OCI-LY7 (cell line): ENCODE measurements at regions of chr6 and their contacts with region 1.

Region 1: GRCh38 chr6:141464490-141464889 is 668.2 kb upstream of the GJE1 start:
- DNase-seq: peak; percentile 56
- H3K4me3 ChIP-seq: no peak overlapping the region
- H3K27ac ChIP-seq: no peak overlapping the region
- H3K4me1 ChIP-seq: peaks cover 8% of the 10 kb centered on the region
- CTCF ChIP-seq: no peak

Region 2: GRCh38 chr6:141105481-141105880 is 359.0 kb before region 1 on chr6:
- CTCF ChIA-PET with region 1: no interaction called
- POLR2A ChIA-PET with region 1: no interaction called
- intact Hi-C with region 1: no loop called
- DNase-seq: no peak
- H3K4me3 ChIP-seq: no peak overlapping the region
- H3K27ac ChIP-seq: no peak overlapping the region
- H3K4me1 ChIP-seq: no peaks in the 10 kb centered on the region
- CTCF ChIP-seq: no peak

Region 3: DNA sequence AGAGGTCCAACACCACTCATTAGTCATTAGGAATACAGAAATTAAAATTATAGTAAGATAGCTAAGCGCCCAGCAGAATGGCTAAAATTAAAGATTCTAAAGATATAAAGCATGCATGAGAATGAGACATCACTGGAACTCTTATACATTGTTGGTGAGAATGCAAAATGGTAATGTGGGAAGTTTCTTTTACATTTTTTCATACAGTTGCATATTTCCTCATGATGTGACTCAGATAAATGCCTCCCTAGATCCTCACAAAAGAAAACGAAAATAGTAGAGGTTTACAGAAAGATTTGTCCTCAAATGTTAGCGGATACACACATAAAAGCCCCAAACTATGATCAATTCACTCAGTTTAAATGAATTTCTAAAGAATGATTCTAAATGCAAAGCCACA is 34.5 kb after region 1 on chr6:
- CTCF ChIA-PET with region 1: no interaction called
- POLR2A ChIA-PET with region 1: interaction called, 4 read pairs
- intact Hi-C with region 1: loop called (anchors 2 kb)
- DNase-seq: no peak
- H3K4me3 ChIP-seq: no peak overlapping the region
- H3K27ac ChIP-seq: no peak overlapping the region
- H3K4me1 ChIP-seq: no peaks in the 10 kb centered on the region
- CTCF ChIP-seq: no peak